ENCODE measurements at regions of chr5 and their contacts with region 1.

Region 1: DNA sequence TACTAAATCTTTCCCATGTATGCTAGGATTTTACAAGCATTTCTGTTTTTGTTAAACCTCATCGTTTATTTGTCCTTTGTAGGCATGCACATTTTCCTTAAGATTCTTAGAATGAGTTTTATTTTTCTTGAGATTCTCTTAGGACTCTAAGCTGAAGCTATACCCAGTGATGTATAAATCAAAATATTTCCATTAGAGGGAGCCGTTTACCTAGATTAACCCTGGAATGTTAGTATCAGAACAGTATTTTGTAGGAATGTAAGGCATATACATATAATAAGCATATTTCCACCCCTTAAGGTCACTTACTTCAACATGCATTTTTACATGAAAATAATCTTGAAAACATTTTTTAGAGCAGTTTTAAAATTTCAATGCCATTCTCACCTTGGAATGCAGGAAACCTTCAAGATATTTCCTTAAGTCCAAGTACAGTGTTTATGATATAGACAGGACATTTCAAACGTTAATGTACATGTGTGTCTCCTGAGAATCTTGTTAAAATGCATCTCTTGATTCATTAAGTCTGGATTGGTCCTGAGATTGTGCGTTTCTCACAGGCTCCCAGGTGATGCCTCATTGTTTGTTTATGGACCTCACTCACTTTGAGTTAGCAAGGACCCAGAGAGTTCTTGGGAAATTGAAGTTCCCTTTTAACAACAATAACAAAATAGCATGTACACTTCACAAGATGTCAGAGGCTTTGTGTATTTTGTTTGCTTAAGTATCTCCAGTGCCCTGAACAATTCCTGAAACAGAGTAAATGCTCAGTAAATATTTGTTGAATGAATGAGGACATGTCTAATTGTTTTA is 34.9 kb upstream of the FCHO2 start:
- DNase-seq: peak; percentile 26
- H3K4me3 ChIP-seq: no peak overlapping the region
- H3K27ac ChIP-seq: no peak overlapping the region
- H3K4me1 ChIP-seq: no peaks in the 10 kb centered on the region
- H3K27me3 ChIP-seq: no peaks in the 10 kb centered on the region
- CTCF ChIP-seq: peak; percentile 29 to 48

Region 2: DNA sequence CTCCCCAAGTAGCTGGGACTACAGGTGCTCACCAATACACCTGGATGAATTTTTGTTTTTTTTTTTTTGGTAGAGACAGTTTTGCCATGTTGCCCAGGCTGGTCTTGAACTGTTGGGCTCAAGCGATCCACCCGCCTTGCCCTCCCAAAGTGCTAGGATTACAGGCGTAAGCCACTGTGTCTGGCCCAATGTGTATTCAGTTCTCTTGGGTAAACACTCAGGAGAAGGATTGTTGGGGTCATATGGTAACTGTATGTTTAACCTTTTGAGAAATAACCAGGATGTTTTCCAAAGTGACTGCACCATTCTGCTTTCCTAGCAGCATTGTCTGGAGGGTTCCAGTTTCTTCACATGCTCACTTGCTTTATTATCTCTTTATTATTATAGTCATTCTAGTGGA is 37.0 kb before region 1 on chr5:
- CTCF ChIA-PET with region 1: no interaction called
- dilution Hi-C with region 1: loop called (anchors 5 kb)
- in situ Hi-C with region 1: no loop called
- intact Hi-C with region 1: no loop called
- DNase-seq: no peak
- H3K4me3 ChIP-seq: no peak overlapping the region
- H3K27ac ChIP-seq: no peak overlapping the region
- H3K4me1 ChIP-seq: no peaks in the 10 kb centered on the region
- H3K27me3 ChIP-seq: no peaks in the 10 kb centered on the region
- CTCF ChIP-seq: no peak

Region 3: DNA sequence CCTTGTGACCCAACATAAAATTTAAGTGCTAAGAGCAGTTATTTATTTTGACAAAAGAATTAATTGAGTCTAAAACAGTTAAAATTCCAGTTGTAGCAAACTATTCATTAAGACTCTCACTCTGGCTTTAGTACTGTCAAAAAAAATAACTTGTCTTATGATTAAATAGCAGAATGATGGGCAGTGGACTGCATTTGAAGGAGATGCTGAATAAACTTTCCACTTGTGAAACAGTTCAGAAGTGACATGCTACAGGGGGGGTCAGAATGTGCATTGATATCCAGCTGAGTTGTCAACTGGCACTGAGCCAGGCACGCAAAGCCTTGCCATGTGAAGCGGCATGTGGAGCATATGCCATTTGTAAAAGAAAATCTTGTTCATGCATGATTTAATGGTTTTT is 110.9 kb after region 1 on chr5:
- CTCF ChIA-PET with region 1: no interaction called
- dilution Hi-C with region 1: no loop called
- in situ Hi-C with region 1: no loop called
- intact Hi-C with region 1: loop called (anchors 2 kb)
- DNase-seq: peak; percentile 53
- H3K4me3 ChIP-seq: no peak overlapping the region
- H3K27ac ChIP-seq: peak overlapping the region; percentile 84
- H3K4me1 ChIP-seq: peaks cover 31% of the 10 kb centered on the region
- H3K27me3 ChIP-seq: no peaks in the 10 kb centered on the region
- CTCF ChIP-seq: no peak

Region 4: DNA sequence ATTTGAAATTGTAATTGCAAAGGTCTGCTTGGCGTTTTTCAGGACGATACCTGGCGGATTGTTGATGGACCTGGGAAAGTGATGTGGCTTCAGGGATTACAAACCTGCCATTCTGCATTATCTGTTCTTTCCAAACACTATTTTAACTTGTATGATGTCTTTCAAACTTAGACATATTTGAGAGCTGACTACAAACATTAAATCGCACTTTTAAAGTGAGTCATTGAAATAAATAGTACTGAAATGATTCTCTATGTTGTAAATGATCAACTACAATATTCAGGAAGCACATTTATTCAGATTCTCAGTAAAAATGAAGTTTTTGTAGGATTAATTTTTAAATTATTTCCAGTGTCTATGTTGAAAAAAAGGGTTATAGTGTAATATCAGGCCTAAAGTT is 167.1 kb after region 1 on chr5:
- CTCF ChIA-PET with region 1: no interaction called
- dilution Hi-C with region 1: no loop called
- in situ Hi-C with region 1: no loop called
- intact Hi-C with region 1: loop called (anchors 2 kb)
- DNase-seq: no peak
- H3K4me3 ChIP-seq: no peak overlapping the region
- H3K27ac ChIP-seq: no peak overlapping the region
- H3K4me1 ChIP-seq: no peaks in the 10 kb centered on the region
- H3K27me3 ChIP-seq: no peaks in the 10 kb centered on the region
- CTCF ChIP-seq: no peak

Region 5: DNA sequence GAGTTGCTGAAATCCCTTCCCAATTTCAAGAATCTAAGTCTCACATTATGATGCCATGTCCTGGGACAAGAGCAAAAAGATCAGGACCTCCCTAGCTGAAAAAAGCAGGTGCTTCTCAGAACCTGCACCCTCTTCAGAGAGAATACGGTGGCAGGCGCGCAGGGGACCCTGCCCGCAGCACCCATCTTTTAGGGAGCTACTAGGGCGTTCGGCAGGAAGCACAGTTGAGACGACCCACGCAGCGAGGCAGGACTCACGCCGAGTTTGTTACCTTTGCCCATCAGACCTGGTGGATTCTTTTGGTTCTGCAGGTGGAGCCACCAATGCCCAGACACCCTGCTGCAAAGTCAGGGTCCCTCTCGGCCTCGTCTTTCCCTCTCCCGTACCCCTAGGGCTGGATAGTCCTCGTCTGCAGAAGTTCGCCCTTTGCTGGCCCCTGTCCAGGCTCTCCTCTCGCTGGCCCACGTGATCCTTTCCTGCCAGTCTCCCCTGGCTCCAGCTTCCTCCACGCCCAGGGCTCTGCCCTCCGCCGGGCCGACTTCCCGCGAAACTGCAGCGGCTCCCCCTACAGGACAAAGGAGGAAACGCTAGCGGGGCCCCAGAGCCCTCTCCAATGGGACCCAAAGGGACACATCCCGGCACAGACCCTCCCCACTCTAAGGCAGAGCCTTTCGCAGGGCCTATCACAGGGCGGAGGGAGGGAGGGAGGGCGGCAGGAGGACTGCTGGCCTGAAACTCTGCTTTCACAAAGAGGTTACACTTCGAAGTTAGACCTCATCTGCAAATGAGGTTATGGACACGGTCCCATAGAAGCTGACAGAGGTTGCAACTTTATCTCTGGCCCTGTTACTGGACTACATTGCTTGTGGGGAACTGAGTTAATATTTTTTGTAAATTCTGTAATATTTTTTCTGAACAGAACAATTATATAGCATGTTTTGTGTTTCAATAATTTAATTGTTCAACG is 280.9 kb after region 1 on chr5:
- CTCF ChIA-PET with region 1: no interaction called
- dilution Hi-C with region 1: no loop called
- in situ Hi-C with region 1: no loop called
- intact Hi-C with region 1: loop called (anchors 2 kb)
- DNase-seq: peak; percentile 49
- H3K4me3 ChIP-seq: peak overlapping the region in 1 of 3 experiments; percentile 29
- H3K27ac ChIP-seq: no peak overlapping the region
- H3K4me1 ChIP-seq: peaks cover 5% of the 10 kb centered on the region
- H3K27me3 ChIP-seq: peaks cover 3% of the 10 kb centered on the region
- CTCF ChIP-seq: peak; percentile 45 to 94

Region 6: DNA sequence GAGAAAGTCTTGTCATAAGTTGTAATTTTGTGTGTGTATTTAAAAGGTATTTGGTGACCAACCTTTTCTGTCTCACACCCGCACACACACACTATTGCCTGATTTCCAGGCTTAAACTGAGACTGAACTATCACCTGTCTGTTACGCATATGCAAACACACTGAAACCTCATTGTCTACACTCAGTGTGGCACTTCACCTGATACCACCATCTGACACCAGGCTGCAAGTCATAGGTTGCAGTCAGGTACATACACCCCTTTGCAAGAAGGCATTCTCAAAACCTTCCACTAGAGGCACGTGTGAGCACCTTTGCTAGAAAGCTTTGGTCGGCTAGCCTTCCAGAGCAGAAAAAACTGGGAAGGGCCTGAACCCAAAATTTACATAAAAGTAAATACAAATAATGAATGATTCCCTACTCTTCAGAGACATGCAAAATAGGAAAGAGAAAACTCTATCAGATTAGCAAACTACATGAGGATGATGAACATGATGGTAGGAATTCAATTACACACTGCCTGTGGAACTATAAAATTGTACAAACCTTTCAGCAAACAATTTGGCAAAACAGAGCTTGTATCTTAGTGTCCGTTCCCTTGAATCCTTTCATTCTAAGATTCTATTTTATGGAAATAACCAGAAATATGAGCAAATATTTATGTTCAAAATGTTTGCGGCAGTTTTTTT is 533.6 kb after region 1 on chr5:
- CTCF ChIA-PET with region 1: no interaction called
- dilution Hi-C with region 1: no loop called
- in situ Hi-C with region 1: no loop called
- intact Hi-C with region 1: loop called (anchors 2 kb)
- DNase-seq: peak; percentile 69
- H3K4me3 ChIP-seq: no peak overlapping the region
- H3K27ac ChIP-seq: no peak overlapping the region
- H3K4me1 ChIP-seq: peaks cover 12% of the 10 kb centered on the region
- H3K27me3 ChIP-seq: peaks cover 3% of the 10 kb centered on the region
- CTCF ChIP-seq: peak; percentile 92 to 98

Measured in mammary epithelial cell (primary cell).